RWPE1 (cell line): ENCODE measurements at regions of chr6 and their contacts with region 1.

Region 1: GRCh38 chr6:154580401-154581135 is 70.1 kb upstream of the CNKSR3 start:
- DNase-seq: no peak
- H3K27ac ChIP-seq: no peak overlapping the region
- CTCF ChIP-seq: no peak

Region 2: GRCh38 chr6:154341871-154342270 is 238.7 kb before region 1 on chr6:
- CTCF ChIA-PET with region 1: no interaction called
- POLR2A ChIA-PET with region 1: no interaction called
- DNase-seq: peak; percentile 14
- H3K27ac ChIP-seq: no peak overlapping the region
- CTCF ChIP-seq: no peak

Region 3: GRCh38 chr6:154510143-154510905 is 70.2 kb before region 1 on chr6 and contains the start of gene CNKSR3:
- CTCF ChIA-PET with region 1: no interaction called
- POLR2A ChIA-PET with region 1: interaction called, 14 read pairs
- DNase-seq: peak; percentile 74
- H3K27ac ChIP-seq: peak within 1 kb of the TSS; percentile 89
- CTCF ChIP-seq: no peak